Heart left ventricle (tissue), 16 donors: ENCODE measurements at regions of chr7 and their contacts with region 1.

Region 1: DNA sequence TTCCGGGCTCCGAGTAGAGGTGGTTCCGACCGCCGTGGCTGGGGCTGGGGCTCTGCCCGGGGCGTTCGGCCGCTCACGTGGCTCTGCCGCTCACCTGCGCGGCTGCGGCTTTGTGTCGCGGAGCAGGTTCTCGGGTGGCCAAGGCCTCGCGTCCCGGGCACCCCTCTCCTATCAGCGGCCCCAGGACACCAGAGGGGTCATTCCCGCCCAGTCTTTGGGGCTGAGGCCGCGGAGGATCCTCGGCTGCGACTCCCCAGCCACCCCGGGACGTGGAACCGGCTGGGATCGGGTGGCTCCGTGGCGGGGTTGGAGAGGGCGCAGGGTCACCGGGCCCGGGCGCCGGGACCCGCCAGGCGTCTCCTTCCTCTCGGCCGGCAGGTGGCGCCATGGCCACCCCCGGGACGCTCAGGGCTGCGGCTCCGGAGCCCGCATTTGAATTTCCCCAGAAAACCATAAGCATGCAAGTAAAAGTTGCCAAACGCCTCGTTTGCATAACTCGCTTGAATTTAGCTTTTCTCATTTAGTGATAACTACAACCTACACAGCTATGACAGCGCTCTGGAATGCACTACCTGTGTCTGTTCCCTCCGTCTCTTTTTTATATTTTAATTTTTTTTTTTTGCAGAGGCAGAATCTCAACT is 1.2 kb downstream of the COL26A1 start:
- DNase-seq: peak; percentile 44 to 78 (median 57)
- ATAC-seq: peak; percentile 67 to 96 (median 88)
- H3K4me3 ChIP-seq: peak overlapping the region; percentile 41 to 68 (median 58)
- H3K27ac ChIP-seq: no peak overlapping the region
- H3K4me1 ChIP-seq: peaks cover 0 to 20% (median 11%) of the 10 kb centered on the region in 12 donors
- H3K27me3 ChIP-seq: peaks cover 0 to 41% (median 8%) of the 10 kb centered on the region in 9 donors
- CTCF ChIP-seq: peak; percentile 87 to 97 (median 95)
- POLR2A ChIP-seq: no peak

Region 2: DNA sequence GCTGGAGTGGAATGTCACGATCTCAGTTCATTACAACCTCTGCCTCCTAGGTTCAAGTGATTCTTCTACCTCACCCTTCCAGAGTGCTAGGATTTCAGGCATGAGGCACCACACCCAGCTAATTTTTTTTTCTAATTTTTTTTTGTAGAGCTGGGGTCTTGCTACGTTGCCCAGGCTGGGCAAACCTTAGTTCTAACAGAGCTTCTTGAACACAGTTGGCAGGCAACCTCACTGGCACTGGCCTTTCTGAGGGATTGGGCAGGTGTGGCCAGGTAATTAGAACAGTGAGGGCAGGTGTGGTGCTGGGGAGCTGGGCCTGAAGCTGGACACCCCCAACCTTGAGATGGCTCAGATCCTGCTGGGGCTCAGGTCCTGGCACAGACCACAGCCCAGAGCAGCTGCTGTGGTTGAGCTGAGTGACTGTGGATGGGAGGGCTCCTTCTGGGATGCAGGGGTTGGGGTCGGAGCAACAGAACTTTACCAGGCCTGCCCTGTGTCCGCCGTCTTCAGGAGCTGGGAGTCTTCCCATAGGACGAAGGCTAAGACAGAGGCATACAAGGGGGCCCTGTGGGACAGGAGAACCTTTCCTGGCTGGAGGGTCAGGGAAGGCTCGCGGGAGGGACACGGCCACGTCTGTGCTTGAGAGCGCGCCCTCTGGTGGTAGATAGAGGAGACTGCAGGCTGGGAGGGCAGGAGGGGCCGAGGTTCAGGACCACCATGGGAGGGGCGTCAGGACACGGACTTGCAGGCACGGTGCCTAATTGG is 47.1 kb after region 1 on chr7:
- intact Hi-C with region 1: loop called in 5 of 10 experiments (anchors 1 to 5 kb)
- DNase-seq: peak in 3 of 5 donors; percentile 20 to 31 (median 28)
- ATAC-seq: peak in 3 of 4 donors; percentile 36 to 56 (median 46)
- H3K4me3 ChIP-seq: no peak overlapping the region
- H3K27ac ChIP-seq: no peak overlapping the region
- H3K4me1 ChIP-seq: peaks cover 0 to 5% (median 0%) of the 10 kb centered on the region in 12 donors
- H3K27me3 ChIP-seq: peaks cover 0 to 25% (median under 1%) of the 10 kb centered on the region in 9 donors
- CTCF ChIP-seq: peak; percentile 55 to 85 (median 72)
- POLR2A ChIP-seq: no peak

Region 3: GRCh38 chr7:101537205-101537604 is 173.4 kb after region 1 on chr7:
- intact Hi-C with region 1: loop called in 9 of 10 experiments (anchors 2 to 10 kb)
- DNase-seq: peak in 1 of 5 donors; percentile 5
- ATAC-seq: no peak
- H3K4me3 ChIP-seq: no peak overlapping the region
- H3K27ac ChIP-seq: no peak overlapping the region
- H3K4me1 ChIP-seq: peaks cover 0 to 16% (median 0%) of the 10 kb centered on the region in 12 donors
- H3K27me3 ChIP-seq: peaks cover 0 to under 1% (median 0%) of the 10 kb centered on the region in 9 donors
- CTCF ChIP-seq: no peak
- POLR2A ChIP-seq: no peak

Region 4: GRCh38 chr7:102260856-102261255 is 897.0 kb after region 1 on chr7:
- intact Hi-C with region 1: loop called in 1 of 10 experiments (anchors 10 kb)
- DNase-seq: peak in 4 of 5 donors; percentile 49 to 83 (median 62)
- ATAC-seq: peak; percentile 77 to 92 (median 88)
- H3K4me3 ChIP-seq: no peak overlapping the region
- H3K27ac ChIP-seq: no peak overlapping the region
- H3K4me1 ChIP-seq: no peaks in the 10 kb centered on the region
- H3K27me3 ChIP-seq: no peaks in the 10 kb centered on the region
- CTCF ChIP-seq: no peak
- POLR2A ChIP-seq: no peak

Region 5: GRCh38 chr7:102272075-102272917 is 908.4 kb after region 1 on chr7:
- intact Hi-C with region 1: loop called in 3 of 10 experiments (anchors 5 to 10 kb)
- DNase-seq: peak; percentile 69 to 88 (median 76)
- ATAC-seq: peak; percentile 86 to 90 (median 88)
- H3K4me3 ChIP-seq: no peak overlapping the region
- H3K27ac ChIP-seq: no peak overlapping the region
- H3K4me1 ChIP-seq: peaks cover 0 to 4% (median 0%) of the 10 kb centered on the region in 12 donors
- H3K27me3 ChIP-seq: no peaks in the 10 kb centered on the region
- CTCF ChIP-seq: peak; percentile 85 to 93 (median 88)
- POLR2A ChIP-seq: no peak